WTC11 (cell line): ENCODE measurements at regions of chr12 and their contacts with region 1.

Region 1: DNA sequence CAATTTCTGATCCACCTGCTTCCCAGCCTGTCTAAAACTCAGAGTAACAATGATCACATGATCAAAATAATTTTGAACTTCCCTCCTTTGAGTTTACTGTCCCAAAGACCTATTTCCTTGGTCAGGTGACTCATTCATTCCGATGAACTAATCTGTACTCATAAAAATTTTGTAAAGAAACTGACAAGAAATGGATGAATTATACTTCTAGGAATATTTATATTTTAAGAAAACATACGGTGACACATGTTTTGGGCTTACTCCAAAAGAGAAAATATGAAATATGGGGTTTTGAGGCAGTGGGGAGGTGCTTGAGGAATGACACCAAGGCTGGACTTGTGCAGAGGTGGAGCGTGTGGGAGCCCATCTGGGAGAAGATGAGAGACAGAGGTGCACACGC is 42.0 kb downstream of the GUCY2C start:
- DNase-seq: no peak
- ATAC-seq: no peak
- H3K4me3 Mint-ChIP-seq: no peak overlapping the region
- H3K27ac Mint-ChIP-seq: no peak overlapping the region
- H3K4me1 Mint-ChIP-seq: peaks cover 21% of the 10 kb centered on the region
- H3K27me3 Mint-ChIP-seq: no peaks in the 10 kb centered on the region; the same call in 1 of the 2 replicates
- CTCF ChIP-seq: no peak

Region 2: DNA sequence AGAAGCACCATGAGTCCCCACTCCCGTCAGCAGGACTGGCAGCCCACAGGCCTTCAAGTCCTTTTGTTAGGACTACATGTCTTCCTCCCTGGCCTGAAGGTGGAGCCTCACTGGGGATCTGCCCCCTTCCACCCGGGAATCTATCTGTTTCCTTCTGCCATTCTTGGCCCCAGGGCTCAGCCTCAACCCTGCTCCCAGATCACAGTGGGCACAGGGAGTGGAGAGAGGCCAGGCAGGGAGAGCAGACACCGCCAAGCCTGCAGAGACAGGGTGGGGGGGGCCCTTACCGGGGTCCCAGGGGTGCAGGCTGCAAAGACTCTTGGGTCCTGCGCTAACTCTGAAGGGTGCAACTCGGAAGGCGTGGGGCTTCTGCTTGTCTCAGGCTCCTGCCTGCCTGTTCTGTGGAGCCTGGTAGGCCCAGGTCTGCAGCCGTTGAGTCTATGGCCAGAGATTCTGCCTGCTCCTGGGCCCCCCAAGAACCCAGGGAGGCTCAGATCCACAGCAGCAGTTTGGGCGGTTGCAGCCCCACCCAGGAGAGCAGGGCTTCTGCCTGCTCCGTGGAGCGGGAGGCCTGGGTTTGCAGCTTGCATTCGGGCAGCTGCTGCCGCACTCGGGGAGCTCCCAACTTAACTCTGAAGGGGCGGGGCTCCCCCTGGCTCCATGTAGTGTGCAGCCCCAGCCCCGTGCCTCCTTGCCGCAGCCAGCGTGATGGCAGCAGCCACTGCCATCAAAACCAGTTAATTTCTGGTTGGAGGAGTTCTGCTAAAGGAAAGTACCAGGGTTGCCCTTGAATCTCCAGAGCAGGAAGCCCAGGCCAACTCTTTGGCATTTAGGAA is 65.0 kb before region 1 on chr12:
- CTCF ChIA-PET with region 1: no interaction called
- POLR2A ChIA-PET with region 1: no interaction called
- DNase-seq: peak; percentile 38
- ATAC-seq: peak; percentile 94
- H3K4me3 Mint-ChIP-seq: no peak overlapping the region
- H3K27ac Mint-ChIP-seq: no peak overlapping the region
- H3K4me1 Mint-ChIP-seq: no peaks in the 10 kb centered on the region; the same call in 1 of the 2 replicates
- H3K27me3 Mint-ChIP-seq: no peaks in the 10 kb centered on the region; the same call in 1 of the 2 replicates
- CTCF ChIP-seq: no peak

Region 3: GRCh38 chr12:14664510-14664909 is 10.1 kb after region 1 on chr12:
- CTCF ChIA-PET with region 1: interaction called, 15 read pairs
- POLR2A ChIA-PET with region 1: no interaction called
- DNase-seq: no peak
- ATAC-seq: 0 out of 2 replicates have a peak, but pooled peaks have one; percentile 17
- H3K4me3 Mint-ChIP-seq: no peak overlapping the region
- H3K27ac Mint-ChIP-seq: no peak overlapping the region
- H3K4me1 Mint-ChIP-seq: peaks cover 20% of the 10 kb centered on the region
- H3K27me3 Mint-ChIP-seq: no peaks in the 10 kb centered on the region; the same call in 1 of the 2 replicates
- CTCF ChIP-seq: peak; percentile 26; the same call in 1 of the 2 replicates